K562 (cell line): ENCODE measurements at regions of chr7 and their contacts with region 1.

Region 1: DNA sequence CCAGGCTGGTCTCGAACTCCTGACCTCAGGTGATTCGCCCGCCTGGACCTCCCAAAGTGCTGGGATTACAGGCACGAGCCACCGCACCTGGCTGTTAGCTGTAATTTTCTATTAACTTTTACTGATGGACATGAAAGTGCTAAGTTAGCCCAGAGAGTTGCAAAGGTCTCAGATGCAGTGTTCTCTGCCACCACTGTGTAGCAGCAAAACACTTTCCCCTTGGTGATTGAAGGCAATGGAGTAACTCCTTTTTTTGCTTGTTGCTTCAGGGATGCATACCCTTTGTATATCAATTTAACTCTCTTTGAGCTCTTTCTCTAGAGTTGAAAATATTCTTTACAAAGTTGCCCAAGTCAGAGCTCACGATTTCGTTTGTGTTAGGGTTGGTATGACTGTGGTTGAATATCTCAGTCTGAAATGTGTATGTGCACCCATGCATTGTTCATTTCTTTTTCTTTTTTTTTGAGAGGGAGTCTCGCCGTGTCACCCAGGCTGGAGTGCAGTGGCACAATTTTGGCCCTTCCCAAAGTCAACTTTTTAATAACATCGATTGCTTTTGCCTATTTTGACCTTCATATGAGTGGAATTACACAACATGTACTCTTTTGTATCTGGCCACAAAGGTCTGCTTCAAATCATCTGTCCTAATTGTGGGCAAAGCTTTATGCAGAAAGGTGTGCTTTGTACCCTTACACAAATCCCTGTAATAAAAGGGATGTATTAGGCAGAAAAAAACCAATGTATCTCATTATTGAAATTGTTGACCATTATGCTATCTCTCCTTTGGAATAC is 52.6 kb downstream of the GTF2I start:
- DNase-seq: peak in 1 of 4 experiments; percentile 32
- ATAC-seq: peak; percentile 75
- H3K4me3 ChIP-seq: no peak overlapping the region
- H3K27ac ChIP-seq: no peak overlapping the region
- H3K4me1 ChIP-seq: no peaks in the 10 kb centered on the region
- H3K27me3 ChIP-seq: no peaks in the 10 kb centered on the region
- CTCF ChIP-seq: peak; percentile 33 to 52 (median 45); a peak in 4 of 6 replicates
- EP300 ChIP-seq: no peak
- POLR2A ChIP-seq: no peak
- RAD21 ChIP-seq: peak; percentile 40 to 77; a peak in 3 of 4 replicates

Region 2: GRCh38 chr7:74587435-74588126 is 122.5 kb before region 1 on chr7:
- CTCF ChIA-PET with region 1: no interaction called
- POLR2A ChIA-PET with region 1: no interaction called
- in situ Hi-C with region 1: no loop called
- intact Hi-C with region 1: no loop called
- DNase-seq: peak; percentile 67 to 87 (median 78)
- ATAC-seq: peak; percentile 96
- H3K4me3 ChIP-seq: no peak overlapping the region
- H3K27ac ChIP-seq: peak overlapping the region; percentile 59; the same call in 1 of the 3 replicates
- H3K4me1 ChIP-seq: peaks cover 18 to 23% of the 10 kb centered on the region in 2 experiments
- H3K27me3 ChIP-seq: no peaks in the 10 kb centered on the region
- CTCF ChIP-seq: no peak
- EP300 ChIP-seq: no peak
- POLR2A ChIP-seq: no peak
- RAD21 ChIP-seq: no peak

Region 3: DNA sequence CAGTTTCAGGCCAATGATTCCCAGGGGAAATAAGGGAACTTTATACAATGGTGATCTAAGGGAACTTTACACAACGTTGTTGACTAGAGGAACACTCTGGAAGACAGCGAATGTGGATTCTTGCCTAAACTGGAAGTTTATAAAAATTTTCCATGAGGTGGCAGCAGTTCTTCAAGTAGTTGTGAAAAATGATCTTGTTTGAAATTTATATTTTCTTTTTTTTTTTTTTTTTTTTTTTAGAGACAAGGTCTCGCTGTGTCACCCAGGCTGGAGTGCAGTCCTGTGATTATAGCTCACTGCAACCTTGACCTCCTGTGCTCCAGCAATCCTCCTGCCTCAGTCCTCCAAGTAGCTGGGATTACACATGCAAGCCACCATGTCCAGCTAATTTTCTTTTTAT is 84.6 kb before region 1 on chr7:
- CTCF ChIA-PET with region 1: no interaction called
- POLR2A ChIA-PET with region 1: no interaction called
- in situ Hi-C with region 1: no loop called
- intact Hi-C with region 1: loop called (anchors 5 kb)
- DNase-seq: peak in 2 of 4 experiments; percentile 11 to 43
- ATAC-seq: peak; percentile 43
- H3K4me3 ChIP-seq: no peak overlapping the region
- H3K27ac ChIP-seq: no peak overlapping the region
- H3K4me1 ChIP-seq: peaks cover 0 to 2% of the 10 kb centered on the region in 2 experiments; a peak in 2 of 5 replicates
- H3K27me3 ChIP-seq: peaks cover 0 to 6% of the 10 kb centered on the region in 2 experiments; a peak in 1 of 5 replicates
- CTCF ChIP-seq: peak in 2 of 3 experiments; percentile 20 to 55; a peak in 2 of 6 replicates
- EP300 ChIP-seq: no peak
- POLR2A ChIP-seq: no peak
- RAD21 ChIP-seq: peak; percentile 33 to 49; a peak in 3 of 4 replicates